ENCODE measurements at regions of chr17 and their contacts with region 1.

Region 1: DNA sequence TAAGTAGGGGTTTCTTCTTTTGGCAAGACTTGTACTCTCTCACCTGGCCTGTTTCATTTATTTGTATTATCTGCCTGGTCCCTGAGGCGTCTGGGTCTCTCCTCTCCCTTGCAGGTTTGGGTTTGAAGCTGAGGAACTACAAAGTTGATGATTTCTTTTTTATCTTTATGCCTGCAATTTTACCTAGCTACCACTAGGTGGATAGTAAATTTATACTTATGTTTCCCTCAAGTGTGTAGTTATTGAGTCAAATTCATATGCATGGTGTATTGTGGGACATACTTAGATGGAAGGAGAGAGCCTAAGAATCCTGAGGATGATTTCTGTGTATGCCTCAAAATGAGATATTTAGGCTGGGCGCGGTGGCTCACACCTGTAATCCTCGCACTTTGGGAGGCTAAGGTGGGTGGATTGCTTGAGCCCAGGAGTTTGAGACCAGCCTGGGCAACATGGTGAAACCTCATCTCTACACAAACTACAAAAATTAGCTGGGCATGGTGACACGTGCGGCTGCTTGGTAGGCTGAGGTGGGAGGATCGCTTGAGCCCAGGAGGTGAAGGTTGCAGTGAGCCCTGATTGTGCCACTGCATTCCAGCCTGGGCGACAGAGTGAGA is 13.6 kb downstream of the TMEM98 start:
- DNase-seq: no peak
- ATAC-seq: no peak
- H3K4me3 ChIP-seq: no peak overlapping the region
- H3K4me1 ChIP-seq: peaks cover 10% of the 10 kb centered on the region
- CTCF ChIP-seq: no peak

Region 2: GRCh38 chr17:32997753-32998632 is 56.5 kb after region 1 on chr17:
- intact Hi-C with region 1: loop called in 1 of 2 experiments (anchors 2 kb)
- DNase-seq: peak; percentile 71 to 97 (median 87)
- ATAC-seq: peak; percentile 87
- H3K4me3 ChIP-seq: no peak overlapping the region
- H3K4me1 ChIP-seq: peaks cover 5% of the 10 kb centered on the region
- CTCF ChIP-seq: peak; percentile 85

Region 3: DNA sequence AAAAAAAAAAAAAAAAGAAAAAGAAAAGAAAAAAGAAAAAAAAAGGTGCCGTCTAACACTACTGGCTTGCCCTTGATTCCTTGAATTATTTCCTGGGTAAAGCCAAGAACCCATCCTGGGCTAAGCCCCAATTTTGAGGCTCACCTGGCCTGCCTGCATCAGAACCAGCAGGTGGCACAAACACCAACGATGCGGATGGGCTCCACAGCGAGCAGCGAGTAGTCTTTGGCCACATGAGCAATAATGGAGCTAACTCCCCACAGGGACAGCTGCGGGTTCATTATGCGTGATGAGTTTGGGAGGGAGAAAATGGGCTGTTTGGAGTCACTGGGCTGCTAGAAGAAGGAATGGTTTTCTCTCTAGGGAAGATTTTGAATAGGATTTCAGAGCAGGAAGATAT is 260.5 kb after region 1 on chr17:
- intact Hi-C with region 1: no loop called
- DNase-seq: no peak
- ATAC-seq: no peak
- H3K4me3 ChIP-seq: no peak overlapping the region
- H3K4me1 ChIP-seq: no peaks in the 10 kb centered on the region
- CTCF ChIP-seq: no peak